ENCODE measurements at regions of chr15 and their contacts with region 1.

Region 1: DNA sequence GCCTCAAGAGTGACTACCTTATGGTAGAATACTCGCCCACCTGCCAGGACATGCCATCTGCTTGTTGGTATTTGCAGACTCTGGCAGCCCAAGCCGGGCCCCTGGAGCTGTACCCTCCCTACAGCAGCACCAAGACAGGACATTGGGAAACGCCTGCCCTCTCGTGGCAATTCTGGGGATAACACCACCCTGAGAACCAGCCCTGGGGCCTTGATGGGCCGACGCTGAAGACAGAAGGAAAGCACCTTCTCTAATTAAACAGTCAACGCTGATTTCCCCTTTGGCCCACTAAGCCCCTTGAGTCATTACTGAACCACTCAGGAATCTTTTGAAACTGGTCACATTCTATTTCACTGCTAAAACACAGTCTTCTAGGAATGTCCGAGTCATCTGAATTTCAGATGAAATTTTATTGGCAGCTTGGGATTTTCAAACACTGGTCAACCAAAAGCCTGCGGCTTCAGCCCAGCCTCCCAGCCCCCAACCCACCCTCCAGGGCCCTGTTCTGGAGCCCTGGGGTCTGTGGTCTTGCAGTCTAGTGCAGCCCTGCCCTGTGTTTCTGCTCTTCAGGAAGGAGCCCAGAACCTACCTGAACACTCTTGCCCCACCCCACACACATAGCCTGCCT is 91.3 kb downstream of the TMEM266 start:
- DNase-seq: peak; percentile 44
- H3K4me3 ChIP-seq: no peak overlapping the region
- CTCF ChIP-seq: peak; percentile 91

Region 2: DNA sequence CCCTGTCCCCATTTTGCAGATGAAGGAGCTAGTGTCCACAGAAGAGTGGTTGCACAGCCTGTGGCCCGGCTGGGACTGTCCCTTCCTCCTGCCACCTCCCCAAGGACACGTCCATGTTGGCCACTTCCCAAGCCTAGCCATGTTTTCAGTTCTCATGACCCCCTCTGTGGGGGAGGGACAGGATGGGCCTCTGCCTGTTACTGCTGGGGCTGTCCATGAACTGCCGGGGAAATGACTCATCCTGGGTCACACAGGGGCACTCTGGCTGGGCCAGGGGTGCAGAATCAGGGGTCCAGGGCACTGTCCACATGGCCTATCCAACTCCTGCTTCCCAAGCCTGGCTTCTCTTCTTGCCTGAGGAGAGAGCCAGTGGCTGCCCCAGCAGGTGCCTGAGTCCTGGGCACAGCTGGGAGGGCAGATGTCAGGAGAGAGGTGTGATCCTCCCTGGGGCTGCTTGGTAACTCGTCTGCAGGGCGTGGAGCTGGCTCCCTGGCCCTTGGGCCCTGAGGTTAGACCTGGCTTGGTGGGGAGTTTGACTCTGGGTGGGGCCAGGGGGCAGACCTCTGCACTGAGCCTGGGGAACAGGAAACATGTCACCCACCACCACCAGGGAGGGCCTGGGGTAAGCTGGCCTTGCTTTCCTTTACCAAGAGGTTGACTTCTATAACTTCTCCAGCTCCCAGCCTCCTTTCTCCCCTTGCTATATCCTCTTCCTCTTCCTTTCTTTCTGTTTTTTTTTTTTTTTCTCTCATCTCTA is 499.6 kb before region 1 on chr15:
- CTCF ChIA-PET with region 1: no interaction called
- POLR2A ChIA-PET with region 1: no interaction called
- DNase-seq: no peak
- H3K4me3 ChIP-seq: peak overlapping the region; percentile 87
- CTCF ChIP-seq: no peak

Region 3: GRCh38 chr15:75817138-75817935 is 333.7 kb before region 1 on chr15:
- CTCF ChIA-PET with region 1: no interaction called
- POLR2A ChIA-PET with region 1: no interaction called
- DNase-seq: no peak
- H3K4me3 ChIP-seq: no peak overlapping the region
- CTCF ChIP-seq: no peak

Region 4: DNA sequence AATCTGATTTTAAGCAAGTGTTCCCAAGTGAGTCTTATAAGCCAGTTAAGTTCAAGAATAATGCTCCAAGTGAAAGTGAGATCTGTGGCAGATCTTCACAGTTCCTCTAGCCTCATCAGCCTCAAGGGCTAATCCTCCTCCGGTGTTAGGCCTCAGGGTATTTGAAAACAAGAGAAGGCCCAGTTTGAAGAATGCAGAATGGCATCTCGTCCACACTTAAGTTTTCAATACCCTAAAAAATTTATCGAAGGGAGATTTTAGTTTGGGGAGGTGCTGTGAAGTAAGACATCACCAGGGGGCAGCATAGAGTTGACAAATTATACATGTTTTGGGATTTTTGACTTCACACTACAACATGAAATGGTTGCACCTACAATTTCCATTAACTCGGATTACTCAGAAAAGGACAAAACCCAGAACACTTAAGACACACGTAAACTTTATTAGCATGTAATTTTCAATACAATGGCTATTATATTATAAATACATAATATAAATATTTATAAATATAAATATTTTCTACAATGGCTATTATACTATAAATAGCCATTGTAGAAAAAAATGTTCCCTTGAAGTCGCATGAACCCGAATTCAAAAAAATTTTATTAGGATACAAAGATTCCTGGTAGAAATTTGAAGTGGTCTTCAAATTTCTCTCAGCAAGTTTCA is 93.6 kb before region 1 on chr15:
- CTCF ChIA-PET with region 1: interaction called, 58 read pairs
- POLR2A ChIA-PET with region 1: no interaction called
- DNase-seq: no peak
- H3K4me3 ChIP-seq: peak overlapping the region; percentile 29
- CTCF ChIP-seq: peak; percentile 57

Region 5: GRCh38 chr15:76163475-76163881 is 12.4 kb after region 1 on chr15:
- CTCF ChIA-PET with region 1: interaction called, 118 read pairs
- POLR2A ChIA-PET with region 1: no interaction called
- DNase-seq: no peak
- H3K4me3 ChIP-seq: no peak overlapping the region
- CTCF ChIP-seq: no peak

Region 6: GRCh38 chr15:76169013-76169412 is 17.9 kb after region 1 on chr15:
- CTCF ChIA-PET with region 1: interaction called, 118 read pairs
- POLR2A ChIA-PET with region 1: no interaction called
- DNase-seq: no peak
- H3K4me3 ChIP-seq: no peak overlapping the region
- CTCF ChIP-seq: no peak

Region 7: DNA sequence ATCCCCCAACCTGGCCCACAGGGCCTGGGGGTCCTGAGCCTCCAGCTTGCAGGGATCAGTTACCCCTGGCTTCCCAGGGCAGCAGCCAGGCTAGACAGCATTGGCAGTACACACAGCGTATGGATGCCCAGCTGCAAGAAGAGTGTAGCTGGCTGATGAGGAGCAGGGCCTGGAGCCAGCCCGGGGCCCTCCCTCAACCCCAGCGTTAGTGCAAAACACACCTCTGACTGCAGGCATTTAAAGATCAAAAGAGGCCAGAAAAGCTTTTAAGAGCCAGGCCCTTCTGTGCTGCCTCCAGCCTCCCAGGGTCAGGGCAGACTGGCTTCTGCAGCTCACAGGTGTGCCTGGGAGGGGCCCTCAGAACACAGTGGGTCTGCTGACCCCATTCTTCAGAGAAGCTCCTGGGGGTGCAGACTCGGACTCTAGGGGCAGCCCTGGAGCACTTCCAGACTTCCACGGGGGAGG is 49.6 kb after region 1 on chr15:
- CTCF ChIA-PET with region 1: no interaction called
- POLR2A ChIA-PET with region 1: no interaction called
- DNase-seq: no peak
- H3K4me3 ChIP-seq: no peak overlapping the region
- CTCF ChIP-seq: no peak

Region 8: GRCh38 chr15:76866716-76867321 is 715.7 kb after region 1 on chr15:
- CTCF ChIA-PET with region 1: interaction called, 16 read pairs
- POLR2A ChIA-PET with region 1: no interaction called
- DNase-seq: peak; percentile 10
- H3K4me3 ChIP-seq: no peak overlapping the region
- CTCF ChIP-seq: peak; percentile 43

Measured in AG04449 (cell line).